K562 (cell line): ENCODE measurements at regions of chr5 and their contacts with region 1.

Region 1: GRCh38 chr5:169302491-169303118 is 1.7 kb upstream of the SLIT3 start:
- DNase-seq: peak; percentile 67 to 78 (median 71)
- ATAC-seq: peak; percentile 94
- H3K4me3 ChIP-seq: no peak overlapping the region
- H3K27ac ChIP-seq: no peak overlapping the region
- H3K4me1 ChIP-seq: peaks cover 0 to 7% of the 10 kb centered on the region in 2 experiments; a peak in 1 of 5 replicates
- H3K27me3 ChIP-seq: peaks cover 0 to 16% of the 10 kb centered on the region in 2 experiments; a peak in 3 of 5 replicates
- CTCF ChIP-seq: peak; percentile 70 to 88 (median 84)
- EP300 ChIP-seq: no peak
- POLR2A ChIP-seq: no peak
- RAD21 ChIP-seq: peak; percentile 67 to 69

Region 2: DNA sequence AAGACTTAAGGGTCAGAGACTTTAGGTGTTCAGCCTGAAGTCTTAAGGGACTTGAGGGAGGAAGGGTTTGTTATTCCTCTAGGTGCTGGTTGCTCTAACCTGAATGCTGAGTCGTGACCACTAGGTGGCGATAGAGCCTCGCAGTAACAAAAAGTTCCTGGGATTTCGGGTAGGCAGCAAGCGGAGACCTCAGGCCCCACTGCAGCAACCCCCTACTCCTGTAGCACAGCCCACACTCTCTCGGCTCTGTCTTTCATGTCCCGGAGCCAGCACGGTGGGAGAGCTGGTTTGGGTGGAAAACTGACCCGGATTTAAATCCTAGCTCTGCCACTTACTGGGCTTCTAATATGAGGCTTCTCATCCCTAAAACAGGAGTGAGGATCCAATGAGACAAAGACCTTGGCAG is 623.1 kb before region 1 on chr5:
- CTCF ChIA-PET with region 1: no interaction called
- POLR2A ChIA-PET with region 1: no interaction called
- in situ Hi-C with region 1: no loop called
- intact Hi-C with region 1: loop called (anchors 1 kb)
- DNase-seq: peak; percentile 71 to 79 (median 76)
- ATAC-seq: peak; percentile 91
- H3K4me3 ChIP-seq: no peak overlapping the region
- H3K27ac ChIP-seq: no peak overlapping the region
- H3K4me1 ChIP-seq: no peaks in the 10 kb centered on the region; a peak in 1 of 5 replicates
- H3K27me3 ChIP-seq: peaks cover 0 to 5% of the 10 kb centered on the region in 2 experiments; a peak in 1 of 5 replicates
- CTCF ChIP-seq: peak; percentile 81 to 85 (median 85)
- EP300 ChIP-seq: no peak
- POLR2A ChIP-seq: no peak
- RAD21 ChIP-seq: peak; percentile 76 to 84

Region 3: DNA sequence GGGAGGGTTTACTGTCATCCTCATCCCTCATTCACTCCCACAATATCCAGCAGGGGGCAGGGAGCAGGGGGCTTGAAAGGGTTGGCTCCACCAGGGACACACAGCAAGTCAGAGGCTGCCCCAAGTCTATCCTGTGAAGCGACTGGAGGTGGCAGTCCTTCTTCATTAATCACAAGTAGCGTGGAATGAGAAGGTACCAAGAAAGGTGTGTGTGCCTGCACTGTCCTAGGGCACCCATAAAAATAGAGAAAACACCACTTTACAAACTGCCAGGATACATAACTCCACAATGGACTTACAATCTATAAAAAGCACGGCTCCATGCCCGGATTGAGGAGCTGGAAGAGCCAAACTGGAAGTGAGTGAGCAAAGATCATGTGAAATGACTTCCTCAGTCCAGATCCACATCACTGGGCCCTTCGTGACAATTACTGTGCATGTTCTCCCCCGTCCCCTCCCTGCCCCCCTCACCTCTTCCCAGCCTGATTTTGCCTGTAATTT is 185.6 kb before region 1 on chr5:
- CTCF ChIA-PET with region 1: no interaction called
- POLR2A ChIA-PET with region 1: no interaction called
- in situ Hi-C with region 1: no loop called
- intact Hi-C with region 1: loop called (anchors 2 kb)
- DNase-seq: peak in 2 of 4 experiments; percentile 9 to 11
- ATAC-seq: peak; percentile 73
- H3K4me3 ChIP-seq: no peak overlapping the region
- H3K27ac ChIP-seq: no peak overlapping the region
- H3K4me1 ChIP-seq: no peaks in the 10 kb centered on the region
- H3K27me3 ChIP-seq: no peaks in the 10 kb centered on the region
- CTCF ChIP-seq: peak; percentile 27 to 45 (median 33); a peak in 5 of 6 replicates
- EP300 ChIP-seq: no peak
- POLR2A ChIP-seq: no peak
- RAD21 ChIP-seq: no peak